CD4-positive, alpha-beta T cell (primary cell): ENCODE measurements at regions of chr10 and their contacts with region 1.

Region 1: DNA sequence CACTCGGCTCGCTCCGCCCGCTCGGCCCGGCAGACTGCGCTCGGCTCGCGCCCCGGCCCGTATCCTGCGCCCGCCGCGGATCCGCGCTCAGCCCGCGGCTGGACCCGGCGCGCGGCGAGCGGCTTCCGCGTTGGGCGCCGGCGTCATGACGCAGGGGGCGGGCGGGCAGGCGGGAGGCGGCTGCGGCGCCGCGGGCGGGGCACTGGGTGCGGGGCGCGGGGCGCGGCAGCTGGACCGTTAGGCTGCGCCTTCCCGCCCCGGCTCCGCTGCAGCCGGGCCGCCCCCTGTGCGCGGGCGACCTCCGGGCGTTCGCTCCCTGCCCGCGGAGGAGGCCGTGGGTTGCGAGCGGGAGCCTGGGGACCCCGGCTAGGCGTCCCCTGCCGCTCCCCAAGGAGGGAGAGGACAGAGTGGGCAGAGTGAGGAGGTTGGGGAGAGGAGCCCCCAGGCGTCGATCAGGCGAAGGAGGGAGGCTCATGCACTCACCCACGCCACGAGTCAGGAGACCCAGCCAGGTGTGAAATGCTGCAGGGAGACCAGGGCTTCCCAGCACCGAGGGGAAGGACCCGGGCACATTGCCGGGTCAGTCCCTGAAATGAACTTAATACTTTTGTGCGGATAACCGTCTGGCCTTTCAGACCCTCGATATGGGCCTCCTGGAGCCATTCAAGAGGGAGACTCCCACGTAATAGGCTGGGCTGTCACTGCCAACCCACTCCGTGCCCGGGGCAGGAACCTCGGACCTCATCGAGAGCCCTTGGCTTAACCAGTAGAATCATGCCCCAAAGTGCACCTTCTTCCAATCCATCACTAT is at the start of gene PIP4K2A:
- DNase-seq: peak; percentile 56 to 94 (median 74)
- ATAC-seq: peak; percentile 77
- H3K4me3 ChIP-seq: peak within 1 kb of the TSS; percentile 90
- H3K4me3 Mint-ChIP-seq: peak within 1 kb of the TSS; percentile 96
- H3K27ac ChIP-seq: peak within 1 kb of the TSS; percentile 77 to 86
- H3K27ac Mint-ChIP-seq: peak within 1 kb of the TSS; percentile 88
- H3K4me1 ChIP-seq: peaks cover 16% of the 10 kb centered on the region
- H3K4me1 Mint-ChIP-seq: peaks cover 38% of the 10 kb centered on the region
- H3K27me3 ChIP-seq: no peaks in the 10 kb centered on the region
- H3K27me3 Mint-ChIP-seq: no peaks in the 10 kb centered on the region
- CTCF ChIP-seq: no peak
- total RNA-seq, gene PIP4K2A: 75.4 to 87.2 TPM

Region 2: GRCh38 chr10:22615819-22616499 is 98.7 kb before region 1 on chr10:
- CTCF ChIA-PET with region 1: interaction called, 10 read pairs
- POLR2A ChIA-PET with region 1: interaction called, 46 read pairs
- intact Hi-C with region 1: loop called (anchors 1 to 5 kb)
- DNase-seq: peak in 8 of 14 experiments; percentile 22 to 78 (median 44)
- ATAC-seq: peak; percentile 29
- H3K4me3 ChIP-seq: peak overlapping the region; percentile 31
- H3K4me3 Mint-ChIP-seq: peak overlapping the region; percentile 58
- H3K27ac ChIP-seq: peak overlapping the region in 1 of 2 donors; percentile 68
- H3K27ac Mint-ChIP-seq: peak overlapping the region; percentile 98
- H3K4me1 ChIP-seq: peaks cover 80% of the 10 kb centered on the region
- H3K4me1 Mint-ChIP-seq: peaks cover 98% of the 10 kb centered on the region
- H3K27me3 ChIP-seq: no peaks in the 10 kb centered on the region
- H3K27me3 Mint-ChIP-seq: no peaks in the 10 kb centered on the region
- CTCF ChIP-seq: no peak

Region 3: GRCh38 chr10:22648547-22648961 is 66.1 kb before region 1 on chr10:
- CTCF ChIA-PET with region 1: interaction called, 5 read pairs
- POLR2A ChIA-PET with region 1: interaction called, 53 read pairs
- intact Hi-C with region 1: no loop called
- DNase-seq: peak in 3 of 14 experiments; percentile 50 to 60 (median 53)
- ATAC-seq: no peak
- H3K4me3 ChIP-seq: no peak overlapping the region
- H3K4me3 Mint-ChIP-seq: peak overlapping the region; percentile 68
- H3K27ac ChIP-seq: peak overlapping the region; percentile 55 to 58
- H3K27ac Mint-ChIP-seq: peak overlapping the region; percentile 91
- H3K4me1 ChIP-seq: peaks cover 91% of the 10 kb centered on the region
- H3K4me1 Mint-ChIP-seq: peaks cover 91% of the 10 kb centered on the region
- H3K27me3 ChIP-seq: no peaks in the 10 kb centered on the region
- H3K27me3 Mint-ChIP-seq: no peaks in the 10 kb centered on the region
- CTCF ChIP-seq: no peak

Region 4: DNA sequence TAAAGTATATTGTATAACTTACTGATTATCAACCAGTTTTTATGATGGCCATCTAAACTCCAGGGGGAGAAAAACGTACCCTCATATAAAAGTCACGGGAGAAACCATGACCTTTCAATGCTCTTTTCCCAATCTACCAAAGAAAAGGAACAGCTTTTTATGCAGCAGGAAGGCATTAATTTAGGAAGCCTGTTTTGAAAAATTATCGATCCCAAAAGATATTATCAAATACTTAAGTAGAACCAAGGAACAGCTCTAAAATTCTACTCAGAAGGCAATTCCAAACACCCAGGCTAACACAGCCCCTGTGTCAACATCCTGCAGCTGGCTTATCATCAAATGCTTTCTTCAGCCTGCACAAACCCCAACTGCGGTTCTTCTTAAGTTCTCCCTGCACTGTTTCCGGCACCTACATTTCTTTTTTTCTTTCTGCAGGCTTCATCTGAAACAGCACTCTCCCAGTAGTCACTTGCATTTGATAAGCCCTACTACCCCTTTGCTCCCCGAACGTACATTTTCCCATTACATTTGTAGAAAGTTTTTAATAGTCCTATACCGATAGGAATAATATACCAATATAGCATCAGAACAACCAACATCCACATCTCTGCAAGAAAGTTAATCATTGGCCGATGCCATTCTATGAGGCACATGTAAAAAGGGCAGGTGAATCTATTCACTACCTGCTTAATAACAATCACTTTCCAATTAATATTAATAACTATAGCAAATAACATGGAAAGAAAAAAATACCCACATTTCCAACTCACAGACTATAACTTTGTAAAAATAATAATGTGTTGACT is 48.2 kb before region 1 on chr10:
- CTCF ChIA-PET with region 1: interaction called, 4 read pairs
- POLR2A ChIA-PET with region 1: interaction called, 37 read pairs
- intact Hi-C with region 1: loop called in 1 of 2 experiments (anchors 1 kb)
- DNase-seq: peak in 13 of 14 experiments; percentile 34 to 91 (median 58)
- ATAC-seq: peak; percentile 90
- H3K4me3 ChIP-seq: peak overlapping the region; percentile 45
- H3K4me3 Mint-ChIP-seq: peak overlapping the region; percentile 77
- H3K27ac ChIP-seq: peak overlapping the region; percentile 42 to 63
- H3K27ac Mint-ChIP-seq: peak overlapping the region; percentile 84
- H3K4me1 ChIP-seq: peaks cover 38% of the 10 kb centered on the region
- H3K4me1 Mint-ChIP-seq: peaks cover 83% of the 10 kb centered on the region
- H3K27me3 ChIP-seq: no peaks in the 10 kb centered on the region
- H3K27me3 Mint-ChIP-seq: no peaks in the 10 kb centered on the region
- CTCF ChIP-seq: no peak

Region 5: DNA sequence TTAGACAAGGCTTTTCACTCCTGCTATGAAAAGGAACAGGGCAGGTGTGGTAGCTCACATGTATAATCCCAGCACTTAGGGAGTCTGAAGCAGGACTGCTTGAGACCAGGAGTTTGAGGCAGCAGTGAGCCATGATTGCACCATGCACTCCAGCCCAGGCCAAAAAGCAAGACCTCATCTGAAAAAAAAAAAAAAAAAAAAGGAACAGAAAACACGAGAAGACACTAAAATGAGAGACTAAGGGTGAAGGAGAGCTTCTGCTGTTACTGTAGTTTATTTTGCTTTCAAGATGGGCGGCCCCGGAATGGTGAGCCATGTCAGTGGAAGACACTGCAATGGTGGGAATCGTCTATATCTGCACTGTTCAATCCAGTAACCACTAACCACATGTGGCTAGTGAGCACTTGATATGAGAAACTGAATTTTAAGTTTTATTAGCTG is 10.2 kb before region 1 on chr10:
- CTCF ChIA-PET with region 1: interaction called, 4 read pairs
- POLR2A ChIA-PET with region 1: interaction called, 13 read pairs
- intact Hi-C with region 1: loop called in 1 of 2 experiments (anchors 2 kb)
- DNase-seq: no peak
- ATAC-seq: no peak
- H3K4me3 ChIP-seq: no peak overlapping the region
- H3K4me3 Mint-ChIP-seq: peak overlapping the region; percentile 63
- H3K27ac ChIP-seq: no peak overlapping the region
- H3K27ac Mint-ChIP-seq: peak overlapping the region; percentile 83
- H3K4me1 ChIP-seq: peaks cover 78% of the 10 kb centered on the region
- H3K4me1 Mint-ChIP-seq: peaks cover 99% of the 10 kb centered on the region
- H3K27me3 ChIP-seq: no peaks in the 10 kb centered on the region
- H3K27me3 Mint-ChIP-seq: no peaks in the 10 kb centered on the region
- CTCF ChIP-seq: no peak

Region 6: DNA sequence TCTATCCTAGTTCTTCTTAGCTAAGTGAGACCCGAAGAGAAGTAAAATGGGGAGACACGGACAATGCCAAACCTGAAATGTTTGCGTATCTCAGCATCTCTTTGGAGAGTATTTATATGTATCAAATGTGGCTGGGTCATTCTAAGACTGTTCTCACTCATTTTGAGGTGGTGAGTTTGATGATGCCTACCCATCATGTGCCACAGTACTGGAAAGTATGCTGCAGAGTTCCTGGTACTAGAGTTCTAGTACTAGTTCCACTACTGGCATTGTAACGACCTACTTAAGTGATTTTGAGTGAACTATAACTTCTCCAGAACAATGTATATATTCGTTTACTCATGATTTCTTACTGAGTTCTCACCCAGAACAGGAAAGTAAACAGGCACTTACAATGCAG is 255.0 kb after region 1 on chr10:
- CTCF ChIA-PET with region 1: no interaction called
- POLR2A ChIA-PET with region 1: no interaction called
- intact Hi-C with region 1: no loop called
- DNase-seq: no peak
- ATAC-seq: no peak
- H3K4me3 ChIP-seq: no peak overlapping the region
- H3K4me3 Mint-ChIP-seq: no peak overlapping the region
- H3K27ac ChIP-seq: no peak overlapping the region
- H3K27ac Mint-ChIP-seq: no peak overlapping the region
- H3K4me1 ChIP-seq: no peaks in the 10 kb centered on the region
- H3K4me1 Mint-ChIP-seq: no peaks in the 10 kb centered on the region
- H3K27me3 ChIP-seq: no peaks in the 10 kb centered on the region
- H3K27me3 Mint-ChIP-seq: no peaks in the 10 kb centered on the region
- CTCF ChIP-seq: no peak